CD4-positive, alpha-beta memory T cell (primary cell): ENCODE measurements at regions of chr7 and their contacts with region 1.

Region 1: GRCh38 chr7:130961128-130961601 is 227.2 kb upstream of the KLF14 start:
- DNase-seq: peak; percentile 83 to 94 (median 90)
- H3K4me3 ChIP-seq: peak overlapping the region; percentile 27 to 60
- H3K4me3 Mint-ChIP-seq: peak overlapping the region; percentile 88 to 97 (median 94)
- H3K27ac ChIP-seq: peak overlapping the region; percentile 93
- H3K27ac Mint-ChIP-seq: peak overlapping the region in 6 of 7 donors; percentile 96 to 100 (median 99)
- H3K4me1 ChIP-seq: peaks cover 71% of the 10 kb centered on the region
- H3K4me1 Mint-ChIP-seq: peaks cover 26 to 75% (median 47%) of the 10 kb centered on the region in 4 donors
- H3K27me3 ChIP-seq: no peaks in the 10 kb centered on the region
- H3K27me3 Mint-ChIP-seq: no peaks in the 10 kb centered on the region

Region 2: DNA sequence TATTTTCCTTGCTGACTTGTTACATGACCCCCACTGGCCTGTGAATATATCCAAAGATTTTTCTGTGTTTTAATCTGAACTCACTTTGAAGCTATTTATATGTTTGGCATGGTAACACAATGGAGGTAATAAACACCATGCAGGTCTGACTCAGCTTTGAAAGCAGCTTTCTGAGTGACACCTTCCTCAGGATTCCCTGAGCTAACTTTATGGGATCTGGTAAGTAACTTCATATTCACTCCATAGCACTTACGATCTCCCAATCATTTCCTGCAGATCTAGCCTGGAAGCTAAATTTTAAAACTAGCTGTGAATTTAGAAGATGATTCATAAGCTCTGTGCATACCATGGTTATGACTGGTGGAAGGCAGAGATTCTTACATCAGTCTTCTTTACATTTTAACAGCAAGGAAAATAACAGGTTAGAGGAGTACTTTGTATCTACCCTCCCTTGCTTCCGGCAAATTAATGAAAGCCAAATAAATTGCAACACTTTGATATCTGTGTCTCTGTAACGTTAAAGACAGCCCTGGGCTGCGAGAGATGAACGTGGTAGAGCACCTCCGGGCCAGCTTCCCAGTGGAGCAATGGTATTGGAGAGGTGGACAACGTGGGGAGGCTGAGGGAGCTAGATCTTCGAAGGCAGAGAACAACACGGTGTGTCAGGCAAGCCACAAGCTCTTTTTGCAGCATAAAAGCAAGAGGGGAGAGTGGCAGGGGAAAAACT is 57.0 kb before region 1 on chr7:
- CTCF ChIA-PET with region 1: interaction called, 50 read pairs
- POLR2A ChIA-PET with region 1: no interaction called
- intact Hi-C with region 1: no loop called
- DNase-seq: no peak
- H3K4me3 ChIP-seq: no peak overlapping the region
- H3K4me3 Mint-ChIP-seq: peak overlapping the region in 7 of 8 donors; percentile 18 to 85 (median 41)
- H3K27ac ChIP-seq: peak overlapping the region; percentile 52
- H3K27ac Mint-ChIP-seq: peak overlapping the region; percentile 70 to 95 (median 91)
- H3K4me1 ChIP-seq: peaks cover 89% of the 10 kb centered on the region
- H3K4me1 Mint-ChIP-seq: peaks cover 59 to 94% (median 72%) of the 10 kb centered on the region in 4 donors
- H3K27me3 ChIP-seq: no peaks in the 10 kb centered on the region
- H3K27me3 Mint-ChIP-seq: no peaks in the 10 kb centered on the region

Region 3: GRCh38 chr7:130912862-130913631 is 48.1 kb before region 1 on chr7:
- CTCF ChIA-PET with region 1: interaction called, 36 read pairs
- POLR2A ChIA-PET with region 1: interaction called, 4 read pairs
- intact Hi-C with region 1: loop called (anchors 1 kb)
- DNase-seq: peak; percentile 80 to 98 (median 85)
- H3K4me3 ChIP-seq: peak overlapping the region; percentile 77 to 86
- H3K4me3 Mint-ChIP-seq: peak overlapping the region; percentile 82 to 98 (median 92)
- H3K27ac ChIP-seq: peak overlapping the region; percentile 96
- H3K27ac Mint-ChIP-seq: peak overlapping the region in 6 of 7 donors; percentile 93 to 99 (median 98)
- H3K4me1 ChIP-seq: peaks cover 86% of the 10 kb centered on the region
- H3K4me1 Mint-ChIP-seq: peaks cover 78 to 97% (median 89%) of the 10 kb centered on the region in 4 donors
- H3K27me3 ChIP-seq: no peaks in the 10 kb centered on the region
- H3K27me3 Mint-ChIP-seq: no peaks in the 10 kb centered on the region

Region 4: DNA sequence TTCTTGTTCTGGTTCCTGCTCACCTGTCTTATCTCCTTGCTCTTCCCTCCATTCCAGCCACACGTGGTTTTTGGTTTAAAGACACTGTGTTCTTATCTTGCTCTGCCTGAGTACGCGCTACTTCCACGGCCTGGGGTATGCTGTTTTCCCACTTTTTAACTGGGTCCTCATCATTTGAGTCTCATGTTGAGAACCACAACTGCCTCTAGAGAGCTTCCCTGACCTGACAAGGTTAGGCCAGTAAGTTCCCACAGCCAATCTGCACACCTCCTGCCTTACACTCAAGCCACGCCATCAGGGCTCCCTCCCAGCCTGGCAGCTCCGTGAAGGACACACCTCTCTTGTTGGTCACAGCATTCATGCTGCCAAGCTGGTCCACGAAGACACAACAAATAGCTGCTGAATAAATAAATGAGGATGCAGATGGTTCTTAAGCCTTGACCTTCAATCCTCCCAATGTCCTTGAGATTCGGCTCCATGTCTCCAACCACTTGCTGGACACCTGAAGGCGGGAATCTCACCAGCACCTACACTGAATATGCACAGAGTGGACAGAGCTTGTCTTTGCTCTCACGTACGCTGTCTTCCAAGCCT is 25.5 kb before region 1 on chr7:
- CTCF ChIA-PET with region 1: interaction called, 13 read pairs
- POLR2A ChIA-PET with region 1: interaction called, 116 read pairs
- intact Hi-C with region 1: loop called (anchors 1 kb)
- DNase-seq: no peak
- H3K4me3 ChIP-seq: no peak overlapping the region
- H3K4me3 Mint-ChIP-seq: peak overlapping the region in 6 of 8 donors; percentile 13 to 65 (median 34)
- H3K27ac ChIP-seq: peak overlapping the region; percentile 77
- H3K27ac Mint-ChIP-seq: peak overlapping the region in 6 of 7 donors; percentile 80 to 94 (median 88)
- H3K4me1 ChIP-seq: peaks cover 99% of the 10 kb centered on the region
- H3K4me1 Mint-ChIP-seq: peaks cover 70 to 96% (median 83%) of the 10 kb centered on the region in 4 donors
- H3K27me3 ChIP-seq: no peaks in the 10 kb centered on the region
- H3K27me3 Mint-ChIP-seq: peaks cover 0 to 2% of the 10 kb centered on the region in 2 donors

Region 5: GRCh38 chr7:130941322-130942210 is 19.6 kb before region 1 on chr7:
- CTCF ChIA-PET with region 1: interaction called, 100 read pairs
- POLR2A ChIA-PET with region 1: interaction called, 176 read pairs
- intact Hi-C with region 1: loop called (anchors 1 kb)
- DNase-seq: peak in 3 of 5 donors; percentile 44 to 73 (median 44)
- H3K4me3 ChIP-seq: peak overlapping the region; percentile 51 to 52
- H3K4me3 Mint-ChIP-seq: peak overlapping the region; percentile 89 to 97 (median 94)
- H3K27ac ChIP-seq: peak overlapping the region; percentile 77
- H3K27ac Mint-ChIP-seq: peak overlapping the region in 6 of 7 donors; percentile 93 to 99 (median 98)
- H3K4me1 ChIP-seq: peaks cover 97% of the 10 kb centered on the region
- H3K4me1 Mint-ChIP-seq: peaks cover 74 to 96% (median 86%) of the 10 kb centered on the region in 4 donors
- H3K27me3 ChIP-seq: no peaks in the 10 kb centered on the region
- H3K27me3 Mint-ChIP-seq: peaks cover 0 to 2% of the 10 kb centered on the region in 2 donors

Region 6: DNA sequence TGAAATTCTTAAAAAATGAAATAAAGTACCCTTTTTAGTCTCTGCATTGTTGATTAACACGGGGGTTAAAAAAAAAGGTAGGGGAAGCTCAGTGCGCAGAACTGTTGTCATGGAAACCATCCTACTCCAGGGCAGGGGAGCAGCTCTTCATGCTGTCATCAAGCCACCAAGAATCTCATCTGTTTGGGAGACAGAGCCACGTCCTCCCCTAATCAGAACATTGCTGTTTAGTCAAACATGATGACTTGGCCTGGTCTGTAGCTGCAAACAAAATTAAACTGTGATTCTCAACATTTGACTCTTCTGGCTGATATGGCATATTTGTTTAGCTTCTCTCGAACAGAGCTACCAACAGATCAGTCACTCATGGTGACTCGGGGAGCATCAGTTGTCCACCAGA is 27.3 kb after region 1 on chr7:
- CTCF ChIA-PET with region 1: interaction called, 28 read pairs
- POLR2A ChIA-PET with region 1: interaction called, 8 read pairs
- intact Hi-C with region 1: loop called (anchors 1 kb)
- DNase-seq: peak; percentile 54 to 80 (median 77)
- H3K4me3 ChIP-seq: no peak overlapping the region
- H3K4me3 Mint-ChIP-seq: peak overlapping the region; percentile 6 to 74 (median 68)
- H3K27ac ChIP-seq: peak overlapping the region; percentile 73
- H3K27ac Mint-ChIP-seq: peak overlapping the region in 6 of 7 donors; percentile 95 to 99 (median 96)
- H3K4me1 ChIP-seq: peaks cover 97% of the 10 kb centered on the region
- H3K4me1 Mint-ChIP-seq: peaks cover 32 to 87% (median 71%) of the 10 kb centered on the region in 4 donors
- H3K27me3 ChIP-seq: no peaks in the 10 kb centered on the region
- H3K27me3 Mint-ChIP-seq: no peaks in the 10 kb centered on the region

Region 7: DNA sequence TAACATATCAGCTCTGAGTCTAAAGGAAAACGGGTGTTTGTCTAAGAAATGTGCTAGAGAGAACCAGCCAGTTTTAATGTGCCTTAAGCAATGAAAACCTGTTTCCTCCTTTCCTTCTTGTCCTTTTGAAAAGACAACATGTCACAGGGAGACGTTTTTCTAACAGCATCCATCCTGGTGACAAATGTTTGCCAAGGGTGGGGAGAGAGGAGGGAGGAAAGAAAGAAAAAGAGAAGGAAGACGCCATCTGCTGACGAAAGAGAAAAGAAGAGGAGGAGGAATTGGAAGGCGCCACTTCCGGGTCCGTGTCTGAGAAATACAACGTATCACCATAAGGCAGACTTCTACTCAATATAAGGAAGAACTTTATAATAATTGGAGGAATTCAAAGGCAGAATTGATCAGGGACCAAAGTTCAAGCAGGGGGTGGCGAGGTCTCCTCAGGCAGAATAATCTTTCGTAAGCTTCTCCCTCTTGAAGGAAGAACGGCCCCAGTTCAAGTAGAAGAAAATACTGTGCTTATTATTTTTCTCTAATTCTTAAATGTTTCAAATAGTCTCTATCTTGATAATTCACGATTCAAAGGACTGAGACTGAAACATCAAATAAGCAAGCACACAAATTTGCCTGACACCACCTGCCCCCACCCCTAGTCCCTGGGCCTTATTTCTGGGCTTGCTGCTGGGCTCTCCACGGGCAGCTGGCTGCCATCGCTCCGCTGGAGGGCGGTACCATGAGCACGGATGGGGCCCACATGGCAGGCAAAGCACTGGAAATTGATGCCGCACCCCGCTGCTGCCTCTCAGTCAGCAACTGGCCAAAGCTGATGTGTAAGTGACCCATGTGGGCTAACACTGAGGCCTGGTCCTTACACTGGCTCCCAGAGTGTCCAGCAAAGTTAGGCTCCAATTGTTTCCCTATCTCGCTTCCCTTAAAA is 46.5 kb after region 1 on chr7:
- CTCF ChIA-PET with region 1: interaction called, 3 read pairs
- POLR2A ChIA-PET with region 1: interaction called, 4 read pairs
- intact Hi-C with region 1: loop called (anchors 1 kb)
- DNase-seq: peak; percentile 65 to 75 (median 68)
- H3K4me3 ChIP-seq: peak overlapping the region in 1 of 2 donors; percentile 13
- H3K4me3 Mint-ChIP-seq: peak overlapping the region in 7 of 8 donors; percentile 13 to 86 (median 69)
- H3K27ac ChIP-seq: peak overlapping the region; percentile 57
- H3K27ac Mint-ChIP-seq: peak overlapping the region; percentile 84 to 99 (median 94)
- H3K4me1 ChIP-seq: peaks cover 86% of the 10 kb centered on the region
- H3K4me1 Mint-ChIP-seq: peaks cover 66 to 94% (median 82%) of the 10 kb centered on the region in 4 donors
- H3K27me3 ChIP-seq: no peaks in the 10 kb centered on the region
- H3K27me3 Mint-ChIP-seq: no peaks in the 10 kb centered on the region

Region 8: GRCh38 chr7:131046246-131046645 is 85.1 kb after region 1 on chr7:
- CTCF ChIA-PET with region 1: no interaction called
- POLR2A ChIA-PET with region 1: no interaction called
- intact Hi-C with region 1: no loop called
- DNase-seq: no peak
- H3K4me3 ChIP-seq: no peak overlapping the region
- H3K4me3 Mint-ChIP-seq: peak overlapping the region in 5 of 8 donors; percentile 6 to 43 (median 31)
- H3K27ac ChIP-seq: no peak overlapping the region
- H3K27ac Mint-ChIP-seq: peak overlapping the region in 6 of 7 donors; percentile 63 to 93 (median 78)
- H3K4me1 ChIP-seq: peaks cover 51% of the 10 kb centered on the region
- H3K4me1 Mint-ChIP-seq: peaks cover 61 to 81% (median 70%) of the 10 kb centered on the region in 4 donors
- H3K27me3 ChIP-seq: no peaks in the 10 kb centered on the region
- H3K27me3 Mint-ChIP-seq: no peaks in the 10 kb centered on the region